ENCODE measurements at regions of chr1 and their contacts with region 1.

Region 1: DNA sequence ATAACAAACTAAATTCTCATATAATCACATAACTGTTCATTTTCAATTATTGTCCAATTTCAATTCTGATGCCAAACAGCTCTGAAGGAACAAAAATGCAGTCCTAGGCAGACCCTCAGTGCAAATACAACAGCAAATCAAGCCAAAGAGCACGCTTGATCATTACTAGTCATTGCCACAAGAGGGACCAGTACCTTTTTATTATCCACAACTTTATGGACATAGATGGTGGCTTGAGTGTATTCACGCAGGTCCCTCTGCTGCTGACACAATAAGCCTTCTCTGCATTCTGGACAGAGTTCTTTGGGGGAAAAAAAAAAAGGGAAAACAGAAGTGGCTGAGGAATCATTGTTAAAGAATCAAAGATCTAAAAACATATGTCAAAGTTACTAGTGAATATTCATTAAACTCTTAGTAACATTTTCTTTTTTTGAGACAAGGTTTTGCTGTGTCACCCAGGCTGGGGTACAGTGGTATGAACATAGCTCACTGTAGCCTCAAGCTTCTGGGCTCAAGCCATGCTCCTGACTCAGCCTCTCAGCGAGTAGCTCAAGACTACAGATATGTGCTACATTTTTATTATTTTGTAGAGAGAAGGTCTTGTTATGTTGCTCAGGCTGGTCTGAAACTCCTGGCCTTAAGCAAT is 34.3 kb upstream of the RAP1GAP start:
- DNase-seq: no peak
- H3K4me3 Mint-ChIP-seq: no peak overlapping the region
- H3K27ac Mint-ChIP-seq: peak overlapping the region; percentile 65
- H3K4me1 Mint-ChIP-seq: peaks cover 25% of the 10 kb centered on the region
- H3K27me3 Mint-ChIP-seq: no peaks in the 10 kb centered on the region

Region 2: GRCh38 chr1:21782868-21783678 is 79.6 kb after region 1 on chr1 and contains the start of gene USP48:
- CTCF ChIA-PET with region 1: interaction called, 11 read pairs
- DNase-seq: peak; percentile 97
- H3K4me3 Mint-ChIP-seq: peak within 1 kb of the TSS; percentile 90
- H3K27ac Mint-ChIP-seq: peak within 1 kb of the TSS; percentile 99
- H3K4me1 Mint-ChIP-seq: peaks cover 32% of the 10 kb centered on the region
- H3K27me3 Mint-ChIP-seq: peaks cover 6% of the 10 kb centered on the region